ENCODE measurements at regions of chr5 and their contacts with region 1.

Region 1: DNA sequence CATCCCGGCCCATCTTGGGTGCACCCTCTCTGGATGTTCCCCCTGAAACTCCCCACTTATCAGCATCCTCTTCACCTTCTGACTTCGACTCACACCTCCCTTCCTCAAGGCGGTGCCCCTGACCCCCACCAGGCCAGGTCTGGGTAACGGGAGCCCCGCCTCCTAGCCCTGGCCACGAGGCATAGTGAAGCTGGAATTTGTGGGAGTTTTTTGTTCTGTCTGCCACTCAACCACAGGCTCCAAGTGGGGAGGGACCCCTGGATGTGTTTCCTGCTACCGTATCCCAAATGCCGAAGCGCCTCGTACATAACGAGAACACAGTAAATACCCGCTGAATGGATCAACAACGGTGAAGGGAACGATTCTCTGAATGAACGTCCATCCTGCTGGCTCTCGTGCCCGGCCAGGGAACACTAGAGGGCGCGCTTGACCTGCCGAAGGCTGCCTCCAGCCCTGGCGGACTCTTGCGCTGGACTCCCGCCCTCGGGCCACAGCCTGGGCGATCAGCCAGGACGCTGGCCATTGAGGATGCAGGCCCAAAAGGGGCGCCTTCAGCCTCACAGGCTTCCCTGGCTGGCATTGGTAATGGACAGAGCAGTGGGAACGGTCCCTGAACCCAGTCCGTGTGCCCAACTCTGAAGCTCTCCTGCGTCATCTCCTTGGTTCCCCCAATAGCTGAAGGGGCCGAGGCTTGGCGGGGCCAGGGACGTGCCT is 47.3 kb upstream of the PHYKPL start:
- DNase-seq: peak; percentile 63 to 78 (median 75)
- H3K4me3 ChIP-seq: no peak overlapping the region
- H3K4me3 Mint-ChIP-seq: peak overlapping the region in 1 of 2 donors; percentile 57
- H3K27ac ChIP-seq: no peak overlapping the region
- H3K27ac Mint-ChIP-seq: no peak overlapping the region
- H3K4me1 ChIP-seq: peaks cover 5 to 7% of the 10 kb centered on the region in 2 donors
- H3K4me1 Mint-ChIP-seq: peaks cover 8% of the 10 kb centered on the region
- H3K27me3 ChIP-seq: no peaks in the 10 kb centered on the region
- H3K27me3 Mint-ChIP-seq: peaks cover 0 to 3% (median 2%) of the 10 kb centered on the region in 3 donors
- CTCF ChIP-seq: peak; percentile 93

Region 2: DNA sequence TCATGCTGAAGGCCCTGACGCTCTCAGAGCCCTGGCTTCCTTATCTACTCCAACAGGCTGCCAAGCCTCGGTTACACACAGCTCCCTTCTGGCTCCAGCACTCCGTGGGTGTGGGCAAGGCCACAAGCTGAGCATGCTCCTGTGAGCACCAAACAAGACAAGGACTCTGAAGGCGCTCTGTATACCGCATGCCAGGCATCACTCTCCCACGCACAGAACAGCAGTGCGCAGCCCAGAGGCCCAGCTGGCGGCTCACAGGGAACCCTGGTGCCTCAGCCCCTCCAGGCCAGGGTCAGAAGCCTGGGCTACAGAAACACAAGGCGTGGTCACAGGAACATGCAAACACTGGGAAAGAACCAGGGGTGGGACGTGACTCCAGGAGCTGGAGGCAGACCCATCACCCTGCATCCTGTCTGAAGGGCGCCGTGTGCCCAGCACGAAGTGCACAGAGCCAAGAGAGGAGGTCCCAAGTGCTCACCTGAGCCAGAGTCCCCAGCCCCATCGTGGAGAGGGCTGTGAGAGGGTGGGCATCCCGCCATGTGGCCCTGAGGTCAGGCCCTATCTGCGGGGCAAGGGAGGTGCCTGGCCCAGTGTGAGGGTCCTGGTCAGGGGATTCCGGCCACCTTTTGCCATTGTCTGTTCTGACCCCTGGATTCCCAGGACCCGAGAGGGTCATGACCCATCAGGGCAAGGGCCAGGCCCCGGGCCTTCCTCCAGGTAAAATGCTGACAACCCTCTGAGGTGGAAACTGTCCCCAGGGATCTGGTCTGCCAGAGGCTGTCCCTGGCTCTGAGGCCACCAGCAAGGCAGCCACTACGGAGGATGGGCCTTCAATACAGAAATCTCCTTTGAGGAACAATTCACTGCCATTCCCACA is 255.7 kb after region 1 on chr5:
- intact Hi-C with region 1: no loop called
- DNase-seq: peak in 1 of 3 donors; percentile 27
- H3K4me3 ChIP-seq: no peak overlapping the region
- H3K4me3 Mint-ChIP-seq: no peak overlapping the region
- H3K27ac ChIP-seq: no peak overlapping the region
- H3K27ac Mint-ChIP-seq: no peak overlapping the region
- H3K4me1 ChIP-seq: peaks cover 73 to 78% of the 10 kb centered on the region in 2 donors
- H3K4me1 Mint-ChIP-seq: peaks cover 76% of the 10 kb centered on the region
- H3K27me3 ChIP-seq: no peaks in the 10 kb centered on the region
- H3K27me3 Mint-ChIP-seq: peaks cover 0 to 2% (median 1%) of the 10 kb centered on the region in 3 donors
- CTCF ChIP-seq: no peak

Region 3: DNA sequence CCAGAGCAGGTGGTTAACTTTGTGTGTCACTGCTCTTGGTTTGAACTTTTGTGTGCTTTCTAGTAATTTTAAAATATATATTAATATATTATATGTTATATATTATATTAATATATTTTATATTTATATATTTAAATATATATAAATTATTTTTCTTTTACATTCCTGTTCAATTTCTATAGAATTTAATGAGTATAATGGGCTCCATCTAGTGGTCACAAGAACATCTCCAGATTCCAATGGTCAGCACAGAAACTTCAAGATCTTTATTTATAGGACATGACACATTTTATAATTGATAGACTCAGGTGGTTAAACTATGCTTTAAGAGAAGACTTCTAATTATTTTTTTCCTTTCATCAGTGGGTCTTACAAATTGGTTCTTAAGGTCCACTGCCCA is 271.2 kb after region 1 on chr5:
- intact Hi-C with region 1: loop called (anchors 2 kb)
- DNase-seq: peak in 2 of 3 donors; percentile 29 to 42
- H3K4me3 ChIP-seq: no peak overlapping the region
- H3K4me3 Mint-ChIP-seq: no peak overlapping the region
- H3K27ac ChIP-seq: no peak overlapping the region
- H3K27ac Mint-ChIP-seq: no peak overlapping the region
- H3K4me1 ChIP-seq: peaks cover 2% of the 10 kb centered on the region in 2 donors
- H3K4me1 Mint-ChIP-seq: peaks cover 10% of the 10 kb centered on the region
- H3K27me3 ChIP-seq: no peaks in the 10 kb centered on the region
- H3K27me3 Mint-ChIP-seq: peaks cover 1 to 4% (median 2%) of the 10 kb centered on the region in 3 donors
- CTCF ChIP-seq: peak; percentile 66

Region 4: GRCh38 chr5:178590141-178590923 is 310.4 kb after region 1 on chr5 and contains the start of gene COL23A1:
- intact Hi-C with region 1: loop called (anchors 2 kb)
- DNase-seq: peak; percentile 25 to 49 (median 33)
- H3K4me3 ChIP-seq: peak within 1 kb of the TSS; percentile 23 to 80 (median 51)
- H3K4me3 Mint-ChIP-seq: peak within 1 kb of the TSS; percentile 78 to 92
- H3K27ac ChIP-seq: no peak within 1 kb of the TSS
- H3K27ac Mint-ChIP-seq: peak within 1 kb of the TSS in 2 of 7 donors; percentile 11 to 23
- H3K4me1 ChIP-seq: peaks cover 19 to 33% of the 10 kb centered on the region in 2 donors
- H3K4me1 Mint-ChIP-seq: peaks cover 20% of the 10 kb centered on the region
- H3K27me3 ChIP-seq: peaks cover 5 to 6% of the 10 kb centered on the region in 2 donors
- H3K27me3 Mint-ChIP-seq: peaks cover 24 to 29% (median 25%) of the 10 kb centered on the region in 3 donors
- CTCF ChIP-seq: peak; percentile 75
- polyA plus RNA-seq, gene COL23A1: 0.11 to 0.21 TPM in 2 of 3 donors, not detected in the other

Region 5: GRCh38 chr5:178838695-178839685 is 559.1 kb after region 1 on chr5:
- intact Hi-C with region 1: loop called (anchors 2 to 5 kb)
- DNase-seq: peak; percentile 44 to 64 (median 60)
- H3K4me3 ChIP-seq: no peak overlapping the region
- H3K4me3 Mint-ChIP-seq: no peak overlapping the region
- H3K27ac ChIP-seq: no peak overlapping the region
- H3K27ac Mint-ChIP-seq: no peak overlapping the region
- H3K4me1 ChIP-seq: no peaks in the 10 kb centered on the region
- H3K4me1 Mint-ChIP-seq: no peaks in the 10 kb centered on the region
- H3K27me3 ChIP-seq: no peaks in the 10 kb centered on the region
- H3K27me3 Mint-ChIP-seq: peaks cover 2 to 8% (median 4%) of the 10 kb centered on the region in 3 donors
- CTCF ChIP-seq: peak; percentile 71